ENCODE measurements at regions of chr14 and their contacts with region 1.

Region 1: DNA sequence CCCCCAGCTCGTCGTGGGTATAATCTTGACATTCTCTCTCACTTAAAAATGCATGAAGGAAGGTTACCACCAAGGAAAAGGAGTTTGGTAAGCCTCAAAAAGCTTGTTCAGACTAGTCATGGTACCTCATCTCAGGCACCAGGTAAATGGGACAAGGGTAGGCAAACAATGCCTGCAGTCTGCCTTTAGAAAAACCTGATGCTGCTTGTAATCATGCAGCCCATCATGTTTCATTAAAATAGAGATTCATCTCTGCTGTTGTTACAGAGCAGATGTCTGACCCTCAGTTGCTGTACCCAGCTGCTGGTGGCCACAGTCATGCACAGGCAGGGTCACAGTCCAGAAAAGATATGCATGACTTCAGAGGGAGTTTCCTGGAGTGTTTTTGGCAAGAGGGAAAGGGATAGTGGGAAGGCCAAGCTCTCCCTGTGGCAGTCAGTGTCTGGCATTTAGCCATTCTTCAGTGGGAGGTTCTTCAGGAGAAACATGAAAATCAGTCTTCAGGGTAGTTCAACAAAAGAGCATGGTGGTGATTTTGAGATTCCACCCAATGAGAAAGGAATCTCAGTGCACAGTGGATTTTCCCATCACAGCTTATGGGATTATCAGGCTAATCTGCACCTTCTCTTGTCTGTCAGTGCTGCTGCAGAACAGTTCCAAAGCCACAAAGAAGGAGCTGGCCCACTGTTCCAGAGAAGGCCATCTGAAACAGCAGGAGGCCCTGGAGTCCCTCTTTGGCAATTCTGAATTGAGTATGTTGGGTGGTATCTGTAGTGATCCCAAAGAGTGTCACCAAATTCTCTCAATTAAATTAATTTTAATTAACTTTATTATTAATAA is 202.7 kb upstream of the FRMD6 start:
- DNase-seq: peak in 1 of 10 donors; percentile 11
- H3K4me3 ChIP-seq: no peak overlapping the region
- H3K27ac ChIP-seq: peak overlapping the region in 7 of 59 donors; percentile 3 to 38 (median 17)
- H3K27me3 ChIP-seq: no peaks in the 10 kb centered on the region
- CTCF ChIP-seq: no peak

Region 2: DNA sequence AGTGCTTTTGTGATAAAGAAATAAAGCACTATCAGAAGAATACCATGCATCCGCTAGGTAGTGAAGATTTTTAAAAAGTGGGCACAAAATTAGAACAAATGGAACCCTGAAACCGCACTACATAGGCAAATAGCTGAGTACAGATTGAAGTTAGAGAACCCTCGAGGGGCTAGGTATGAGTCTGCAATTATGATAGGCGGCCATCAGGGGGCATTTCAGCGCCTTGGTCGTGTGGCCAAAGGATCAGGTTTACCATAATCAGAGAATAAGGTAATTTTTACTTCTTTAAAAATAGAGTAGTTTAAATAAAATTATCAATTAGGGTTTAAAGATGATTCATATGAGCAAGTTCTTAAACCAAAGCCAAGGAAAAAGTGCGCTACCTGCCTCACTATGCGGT is 79.2 kb before region 1 on chr14:
- intact Hi-C with region 1: loop called in 1 of 2 experiments (anchors 10 kb)
- DNase-seq: no peak
- H3K4me3 ChIP-seq: no peak overlapping the region
- H3K27ac ChIP-seq: no peak overlapping the region
- H3K27me3 ChIP-seq: no peaks in the 10 kb centered on the region
- CTCF ChIP-seq: peak in 30 of 56 donors; percentile 7 to 49 (median 28)

Measured in dorsolateral prefrontal cortex (tissue), 120 donors.